ENCODE measurements at regions of chr1 and their contacts with region 1.

Region 1: GRCh38 chr1:3483801-3484444 is 29.5 kb downstream of the ARHGEF16 start:
- DNase-seq: peak; percentile 52
- ATAC-seq: peak; percentile 41
- H3K4me3 Mint-ChIP-seq: no peak overlapping the region
- H3K27ac Mint-ChIP-seq: no peak overlapping the region
- H3K4me1 Mint-ChIP-seq: no peaks in the 10 kb centered on the region
- H3K27me3 Mint-ChIP-seq: no peaks in the 10 kb centered on the region

Region 2: DNA sequence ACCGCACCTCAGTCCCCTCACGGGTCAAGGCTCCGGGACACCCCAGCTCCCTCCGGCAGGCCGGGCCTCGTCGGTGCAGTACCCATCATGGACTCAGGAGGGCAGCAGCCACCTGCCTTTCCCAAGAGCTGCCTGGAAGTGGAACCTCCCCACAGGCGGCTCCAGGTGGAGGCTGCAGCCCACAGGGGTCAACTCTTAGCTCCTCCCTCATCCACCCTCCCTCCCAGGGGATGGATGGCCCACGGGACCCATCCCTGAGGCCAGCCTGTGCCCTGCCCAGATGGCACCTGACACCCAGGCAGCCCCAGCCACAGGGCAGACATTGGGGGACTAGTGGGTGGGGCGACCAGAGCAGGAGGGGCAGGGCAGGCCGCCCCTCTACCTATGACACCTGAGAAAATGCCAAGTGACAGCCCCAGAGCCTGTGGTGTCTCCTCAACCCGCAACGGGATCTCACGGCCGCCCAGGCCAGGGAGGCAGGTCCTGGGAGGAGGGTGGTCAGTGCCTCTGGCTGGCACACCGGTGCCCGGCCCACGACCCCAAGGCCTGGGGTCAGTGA is 30.6 kb before region 1 on chr1:
- CTCF ChIA-PET with region 1: interaction called, 19 read pairs
- DNase-seq: peak; percentile 74
- ATAC-seq: peak; percentile 80
- H3K4me3 Mint-ChIP-seq: no peak overlapping the region
- H3K27ac Mint-ChIP-seq: no peak overlapping the region
- H3K4me1 Mint-ChIP-seq: no peaks in the 10 kb centered on the region
- H3K27me3 Mint-ChIP-seq: peaks cover 16% of the 10 kb centered on the region